H1 (cell line): ENCODE measurements at regions of chr15 and their contacts with region 1.

Region 1: GRCh38 chr15:96494505-96494904 is 164.0 kb downstream of the NR2F2 start:
- DNase-seq: no peak
- H3K4me3 ChIP-seq: no peak overlapping the region
- H3K27ac ChIP-seq: no peak overlapping the region
- H3K4me1 ChIP-seq: peaks cover 0 to 3% (median 0%) of the 10 kb centered on the region in 4 experiments; a peak in 1 of 7 replicates
- H3K27me3 ChIP-seq: peaks cover 0 to 5% (median under 1%) of the 10 kb centered on the region in 4 experiments; a peak in 3 of 7 replicates
- CTCF ChIP-seq: no peak
- EP300 ChIP-seq: no peak
- POLR2A ChIP-seq: no peak
- RAD21 ChIP-seq: no peak

Region 2: GRCh38 chr15:96255599-96255998 is 238.9 kb before region 1 on chr15:
- CTCF ChIA-PET with region 1: no interaction called
- POLR2A ChIA-PET with region 1: no interaction called
- DNase-seq: no peak
- H3K4me3 ChIP-seq: no peak overlapping the region
- H3K27ac ChIP-seq: no peak overlapping the region
- H3K4me1 ChIP-seq: peaks cover 0 to 4% (median 1%) of the 10 kb centered on the region in 4 experiments; a peak in 1 of 7 replicates
- H3K27me3 ChIP-seq: no peaks in the 10 kb centered on the region
- CTCF ChIP-seq: no peak
- EP300 ChIP-seq: no peak
- POLR2A ChIP-seq: no peak
- RAD21 ChIP-seq: no peak

Region 3: DNA sequence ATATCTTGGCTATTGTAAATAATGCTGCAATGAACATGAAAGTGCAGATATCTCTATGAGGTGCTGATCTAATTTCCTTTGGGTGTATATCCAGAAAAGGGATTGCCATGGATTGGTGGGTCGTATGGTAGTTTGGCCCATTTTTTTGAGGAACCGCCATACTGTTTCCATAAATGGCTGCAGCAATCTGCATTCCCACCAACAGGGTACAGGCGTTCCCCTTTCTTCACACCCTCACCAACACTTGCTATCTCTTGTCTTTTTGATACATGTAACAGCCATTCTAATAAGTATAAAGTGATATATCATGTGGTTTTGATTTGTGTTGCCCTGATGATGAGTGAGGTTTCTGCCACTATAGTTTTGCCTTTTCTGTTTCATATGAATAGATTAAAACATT is 17.3 kb before region 1 on chr15:
- CTCF ChIA-PET with region 1: interaction called, 10 read pairs
- POLR2A ChIA-PET with region 1: no interaction called
- DNase-seq: no peak
- H3K4me3 ChIP-seq: no peak overlapping the region
- H3K27ac ChIP-seq: no peak overlapping the region
- H3K4me1 ChIP-seq: no peaks in the 10 kb centered on the region
- H3K27me3 ChIP-seq: no peaks in the 10 kb centered on the region
- CTCF ChIP-seq: no peak
- EP300 ChIP-seq: no peak
- POLR2A ChIP-seq: no peak
- RAD21 ChIP-seq: 0 out of 4 replicates have a peak, but pooled peaks of 1 of the 2 experiments have one; percentile 3

Region 4: DNA sequence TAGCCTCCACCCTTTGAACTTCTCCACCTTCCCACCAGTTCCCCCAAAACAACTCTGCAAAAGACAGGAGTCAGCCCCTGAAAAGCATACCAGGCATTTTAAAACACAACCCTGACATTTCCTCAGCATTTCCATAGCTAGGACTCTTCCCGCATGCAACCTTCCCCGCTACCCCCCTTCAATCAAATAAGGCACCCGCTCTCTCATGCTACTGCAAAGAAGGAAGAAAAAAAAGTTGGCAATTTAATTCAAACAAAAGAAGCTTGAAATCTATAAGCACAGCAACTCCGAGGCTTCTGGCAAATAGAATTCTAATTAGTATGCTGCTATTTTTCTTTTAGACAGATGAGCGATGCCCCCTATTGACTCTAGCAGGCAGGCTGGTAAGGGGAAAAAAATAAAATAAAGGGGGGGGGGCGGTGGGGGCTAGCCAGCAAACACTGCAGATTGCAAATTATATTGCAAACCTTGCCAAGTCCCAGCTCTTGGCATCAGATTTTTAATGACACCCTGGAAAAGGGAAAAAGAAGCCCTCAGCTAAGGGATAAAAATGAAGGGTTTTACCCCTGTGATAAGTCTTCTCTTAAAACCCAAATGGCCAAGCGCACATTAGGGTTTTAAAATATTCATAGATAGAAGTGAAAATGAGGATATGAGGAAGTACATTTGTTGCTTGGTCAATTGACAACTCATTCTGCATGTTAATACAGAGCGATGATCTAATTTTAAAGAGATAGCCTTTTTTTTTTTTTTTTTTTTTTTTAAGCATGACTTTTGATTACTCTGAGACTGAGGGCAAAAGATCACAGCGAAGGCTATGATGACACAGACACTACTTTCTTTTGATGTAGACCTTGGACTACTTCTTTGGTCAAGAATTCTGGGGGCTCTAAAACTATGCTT is 91.2 kb after region 1 on chr15:
- CTCF ChIA-PET with region 1: interaction called, 16 read pairs
- POLR2A ChIA-PET with region 1: no interaction called
- DNase-seq: no peak
- H3K4me3 ChIP-seq: no peak overlapping the region; a peak in 1 of 8 replicates
- H3K27ac ChIP-seq: no peak overlapping the region
- H3K4me1 ChIP-seq: peaks cover 2 to 12% (median 7%) of the 10 kb centered on the region in 4 experiments
- H3K27me3 ChIP-seq: no peaks in the 10 kb centered on the region; a peak in 1 of 7 replicates
- CTCF ChIP-seq: peak in 1 of 3 experiments; percentile 31; a peak in 1 of 4 replicates
- EP300 ChIP-seq: no peak
- POLR2A ChIP-seq: no peak
- RAD21 ChIP-seq: peak; percentile 50 to 51